ENCODE measurements at regions of chr12 and their contacts with region 1.

Region 1: GRCh38 chr12:124687917-124688316 is 120.5 kb upstream of the NCOR2 start:
- DNase-seq: peak; percentile 47 to 92 (median 88)
- H3K4me3 ChIP-seq: peak overlapping the region in 3 of 7 experiments; percentile 2 to 35 (median 33)
- H3K27ac ChIP-seq: no peak overlapping the region
- H3K4me1 ChIP-seq: peaks cover 0 to 26% (median 20%) of the 10 kb centered on the region in 4 experiments
- H3K27me3 ChIP-seq: no peaks in the 10 kb centered on the region

Region 2: DNA sequence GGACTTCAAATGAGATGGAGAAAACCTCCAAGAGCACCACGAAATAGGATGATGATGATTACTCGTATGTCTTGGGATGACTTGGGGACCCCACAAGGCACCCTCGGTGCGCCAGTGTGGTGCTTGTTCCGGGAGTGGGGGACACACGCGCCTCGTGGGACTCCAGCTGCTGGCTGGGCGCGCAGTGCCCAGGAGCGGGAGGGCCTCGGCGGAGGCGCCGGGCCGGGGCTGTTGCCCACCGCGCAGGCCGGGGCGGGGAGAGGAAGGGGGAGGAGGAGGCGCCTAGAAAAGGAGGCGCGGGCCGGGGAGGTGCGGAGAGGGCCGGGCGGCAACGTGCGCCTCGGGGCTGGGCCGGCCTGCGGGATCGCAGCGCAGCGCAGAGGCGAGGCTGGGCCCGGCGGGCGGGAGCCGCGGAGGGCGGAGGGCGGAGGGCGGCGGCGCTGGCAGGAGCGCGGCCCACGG is 393.1 kb before region 1 on chr12 and contains the start of gene RFLNA:
- CTCF ChIA-PET with region 1: no interaction called
- POLR2A ChIA-PET with region 1: no interaction called
- DNase-seq: peak in 1 of 3 donors; percentile 40
- H3K4me3 ChIP-seq: peak within 1 kb of the TSS in 6 of 7 experiments; percentile 36 to 68 (median 50)
- H3K27ac ChIP-seq: no peak within 1 kb of the TSS
- H3K4me1 ChIP-seq: peaks cover 0 to 21% (median 15%) of the 10 kb centered on the region in 4 experiments
- H3K27me3 ChIP-seq: peaks cover 0 to 20% (median 11%) of the 10 kb centered on the region in 5 experiments

Region 3: DNA sequence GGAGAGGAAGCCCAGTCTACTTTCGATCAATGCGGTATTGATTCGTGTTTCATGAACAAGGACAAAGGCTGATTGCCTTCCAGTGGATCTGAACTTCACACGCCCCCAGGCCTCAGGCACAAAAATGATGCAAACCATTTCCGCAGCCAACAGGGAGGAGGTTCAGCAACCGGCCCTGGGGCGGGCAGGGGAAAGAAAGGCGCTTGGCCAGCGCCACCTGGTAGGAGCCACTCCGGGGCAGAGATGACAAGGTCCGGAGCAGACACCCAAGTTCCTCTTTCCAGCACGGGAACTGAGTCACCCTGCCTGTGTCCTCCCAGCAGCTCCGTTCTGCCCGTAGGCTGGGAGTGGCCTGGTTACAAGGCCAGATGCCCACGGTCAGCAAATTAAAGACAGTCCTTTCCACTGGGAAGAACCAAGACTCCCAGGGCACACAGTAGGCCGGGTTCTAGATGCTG is 39.4 kb after region 1 on chr12:
- CTCF ChIA-PET with region 1: interaction called, 12 read pairs
- POLR2A ChIA-PET with region 1: no interaction called
- DNase-seq: peak; percentile 81 to 94 (median 91)
- H3K4me3 ChIP-seq: peak overlapping the region in 2 of 7 experiments; percentile 6 to 17
- H3K27ac ChIP-seq: peak overlapping the region in 1 of 2 experiments; percentile 64
- H3K4me1 ChIP-seq: peaks cover 0 to 21% (median 12%) of the 10 kb centered on the region in 4 experiments
- H3K27me3 ChIP-seq: no peaks in the 10 kb centered on the region

Region 4: DNA sequence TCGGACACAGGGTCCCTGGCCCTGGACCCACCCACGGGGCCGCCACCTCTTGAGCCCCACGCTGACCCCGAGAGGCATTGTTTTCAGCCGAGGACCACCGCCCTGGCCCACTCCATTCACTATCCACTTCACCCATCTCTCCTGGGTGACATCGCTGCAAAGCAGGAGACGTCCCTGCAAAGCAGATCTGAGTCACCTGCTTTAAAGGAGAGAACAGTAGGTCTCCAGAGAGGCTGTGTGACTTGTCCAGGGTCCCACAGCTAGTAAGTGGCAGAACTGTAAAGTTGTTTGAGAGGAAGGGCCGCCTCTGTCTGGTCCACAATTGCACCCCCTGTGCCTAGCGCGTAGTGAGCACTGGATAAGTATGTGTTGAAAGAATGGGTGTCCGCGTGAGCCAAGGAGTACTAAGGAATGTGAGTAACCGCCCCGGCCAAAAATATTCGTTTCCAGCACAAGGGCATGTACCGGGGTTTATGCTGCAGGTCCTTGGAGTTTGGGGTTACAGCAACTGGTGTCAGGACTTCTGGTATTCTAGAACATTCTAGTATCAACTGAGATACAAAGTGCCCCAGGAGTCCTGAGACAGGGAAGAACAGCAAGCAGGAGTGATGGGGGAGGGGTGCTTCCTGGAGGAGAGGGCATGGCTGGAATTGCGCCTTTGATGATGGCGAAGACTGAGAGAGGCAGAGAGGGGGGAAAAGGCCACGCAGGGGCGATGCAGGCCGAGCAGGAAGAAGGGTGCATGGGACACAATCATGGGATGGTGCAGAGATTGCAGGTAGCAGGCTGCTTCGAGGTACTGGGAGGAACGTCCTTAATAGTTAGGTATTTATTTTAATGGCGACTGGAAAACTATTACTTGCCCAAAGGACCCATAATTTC is 84.6 kb after region 1 on chr12:
- CTCF ChIA-PET with region 1: no interaction called
- POLR2A ChIA-PET with region 1: no interaction called
- DNase-seq: no peak
- H3K4me3 ChIP-seq: no peak overlapping the region
- H3K27ac ChIP-seq: no peak overlapping the region
- H3K4me1 ChIP-seq: peaks cover 0 to 14% (median 10%) of the 10 kb centered on the region in 4 experiments
- H3K27me3 ChIP-seq: peaks cover 0 to 5% (median 0%) of the 10 kb centered on the region in 5 experiments

Measured in common myeloid progenitor, CD34-positive (primary cell).